ENCODE measurements at regions of chr12 and their contacts with region 1.

Region 1: GRCh38 chr12:59600171-59600570 is 4.3 kb downstream of the SLC16A7 start:
- DNase-seq: no peak
- H3K4me3 ChIP-seq: no peak overlapping the region
- H3K27ac ChIP-seq: no peak overlapping the region
- H3K4me1 ChIP-seq: no peaks in the 10 kb centered on the region
- H3K27me3 ChIP-seq: no peaks in the 10 kb centered on the region
- CTCF ChIP-seq: no peak
- POLR2A ChIP-seq: no peak

Region 2: GRCh38 chr12:58570411-58570810 is 1029.8 kb before region 1 on chr12:
- intact Hi-C with region 1: loop called (anchors 5 kb)
- DNase-seq: no peak
- H3K4me3 ChIP-seq: no peak overlapping the region
- H3K27ac ChIP-seq: no peak overlapping the region
- H3K4me1 ChIP-seq: no peaks in the 10 kb centered on the region
- H3K27me3 ChIP-seq: no peaks in the 10 kb centered on the region
- CTCF ChIP-seq: no peak
- POLR2A ChIP-seq: no peak

Region 3: GRCh38 chr12:59499774-59500173 is 100.4 kb before region 1 on chr12:
- intact Hi-C with region 1: no loop called
- DNase-seq: no peak
- H3K4me3 ChIP-seq: no peak overlapping the region
- H3K27ac ChIP-seq: no peak overlapping the region
- H3K4me1 ChIP-seq: no peaks in the 10 kb centered on the region
- H3K27me3 ChIP-seq: no peaks in the 10 kb centered on the region
- CTCF ChIP-seq: no peak
- POLR2A ChIP-seq: no peak

Region 4: DNA sequence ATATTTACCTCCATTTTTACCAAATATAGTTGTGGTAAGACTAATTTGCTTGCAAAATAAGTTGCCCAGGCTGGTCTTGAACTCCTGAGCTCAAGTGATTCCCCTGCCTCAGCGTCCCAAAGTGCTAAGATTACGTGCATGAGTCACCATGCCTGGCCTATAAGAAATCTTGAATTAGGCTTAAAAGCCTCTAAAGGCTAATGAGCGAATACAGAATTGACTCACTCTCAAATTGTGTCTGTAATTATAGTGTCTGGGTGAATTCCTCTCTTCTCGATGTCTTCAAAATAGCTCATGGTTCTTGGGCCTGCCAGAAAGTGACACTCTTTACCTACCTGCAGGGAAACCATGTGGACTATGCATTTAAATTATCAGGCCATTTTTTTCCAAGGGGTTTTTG is 399.1 kb after region 1 on chr12:
- intact Hi-C with region 1: no loop called
- DNase-seq: no peak
- H3K4me3 ChIP-seq: no peak overlapping the region
- H3K27ac ChIP-seq: no peak overlapping the region
- H3K4me1 ChIP-seq: no peaks in the 10 kb centered on the region
- H3K27me3 ChIP-seq: no peaks in the 10 kb centered on the region
- CTCF ChIP-seq: no peak
- POLR2A ChIP-seq: no peak